GM12878 (cell line): ENCODE measurements at regions of chr6 and their contacts with region 1.

Region 1: DNA sequence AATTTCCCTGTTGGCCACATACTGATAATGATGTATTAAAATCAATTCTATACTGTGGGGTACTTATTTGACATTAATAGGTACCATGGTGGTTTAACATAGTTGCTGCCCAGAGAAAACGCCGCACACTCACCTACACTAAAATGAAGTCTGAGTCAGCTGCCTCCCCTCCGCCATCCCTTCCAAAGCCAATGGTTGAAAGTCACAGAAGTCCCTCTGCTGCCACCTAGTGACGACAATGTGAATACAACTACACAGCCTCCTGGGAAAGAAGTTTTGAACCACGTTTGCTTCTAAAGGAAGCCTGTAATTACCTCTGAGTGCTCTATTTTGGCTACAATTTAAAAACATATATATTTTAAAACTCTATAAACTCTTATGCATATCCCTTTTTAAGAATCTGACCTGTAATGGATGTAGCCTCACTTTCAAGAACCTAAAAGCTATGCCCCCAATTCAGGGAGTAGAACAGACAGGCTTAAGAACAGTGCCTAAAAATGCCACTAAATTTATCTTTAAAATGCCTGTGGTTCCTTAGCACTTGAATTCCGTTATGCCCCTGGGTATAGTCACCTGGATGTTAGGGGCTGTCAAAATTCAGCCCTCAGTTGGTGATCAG is 20.6 kb upstream of the ECI2 start:
- DNase-seq: no peak
- ATAC-seq: peak; percentile 98
- H3K4me3 ChIP-seq: no peak overlapping the region
- H3K27ac ChIP-seq: no peak overlapping the region
- H3K4me1 ChIP-seq: no peaks in the 10 kb centered on the region
- H3K27me3 ChIP-seq: no peaks in the 10 kb centered on the region
- CTCF ChIP-seq: peak; percentile 74 to 87 (median 79)
- EP300 ChIP-seq: no peak
- POLR2A ChIP-seq: no peak
- RAD21 ChIP-seq: peak; percentile 89

Region 2: GRCh38 chr6:3742426-3743344 is 413.3 kb before region 1 on chr6:
- CTCF ChIA-PET with region 1: interaction called, 22 read pairs
- POLR2A ChIA-PET with region 1: no interaction called
- RAD21 ChIA-PET with region 1: interaction called, 7 read pairs
- SMC1A ChIA-PET with region 1: interaction called, 9 read pairs
- in situ Hi-C with region 1: loop called (anchors 5 kb)
- intact Hi-C with region 1: loop called (anchors 1 kb)
- DNase-seq: no peak
- ATAC-seq: peak; percentile 87
- H3K4me3 ChIP-seq: no peak overlapping the region
- H3K27ac ChIP-seq: no peak overlapping the region
- H3K4me1 ChIP-seq: peaks cover 8% of the 10 kb centered on the region
- H3K27me3 ChIP-seq: no peaks in the 10 kb centered on the region
- CTCF ChIP-seq: peak; percentile 81 to 98 (median 83); a peak in 5 of 6 replicates
- EP300 ChIP-seq: no peak
- POLR2A ChIP-seq: no peak
- RAD21 ChIP-seq: peak; percentile 95

Region 3: DNA sequence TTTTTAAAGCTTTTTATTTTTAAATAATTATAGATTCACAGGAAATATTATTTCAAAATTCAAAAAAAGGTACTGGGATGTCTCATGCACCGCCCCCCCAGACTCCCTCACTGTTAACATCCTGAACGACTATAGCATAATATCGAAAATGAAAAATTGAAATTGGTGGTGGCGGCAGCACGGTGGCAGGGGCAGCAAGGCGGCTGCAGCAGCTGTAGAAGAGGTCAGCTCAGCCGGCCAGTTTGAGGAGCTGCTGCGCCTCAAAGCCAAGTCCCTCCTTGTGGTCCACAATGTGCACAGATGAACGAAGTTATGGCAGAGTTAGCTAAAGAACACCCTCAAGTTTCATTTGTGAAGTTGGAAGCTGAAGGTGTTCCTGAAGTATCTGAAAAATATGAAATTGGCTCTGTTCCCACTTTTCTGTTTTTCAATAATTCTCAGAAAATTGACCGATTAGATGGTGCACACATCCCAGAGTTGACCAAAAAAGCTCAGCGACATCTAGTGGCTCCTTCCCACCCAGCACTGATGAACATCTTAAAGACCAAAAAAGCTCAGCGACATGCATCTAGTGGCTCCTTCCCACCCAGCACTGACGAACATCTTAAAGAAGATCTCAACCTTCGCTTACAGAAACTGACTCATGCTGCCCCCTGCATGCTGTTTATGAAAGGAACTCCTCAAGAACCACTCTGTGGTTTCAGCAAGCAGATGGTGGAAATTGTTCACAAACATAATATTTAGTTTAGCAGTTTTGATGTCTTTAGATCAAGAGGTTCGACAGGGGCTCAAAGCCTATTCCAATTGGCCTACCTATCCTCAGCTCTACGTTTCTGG is 177.9 kb before region 1 on chr6:
- CTCF ChIA-PET with region 1: interaction called, 11 read pairs
- POLR2A ChIA-PET with region 1: no interaction called
- RAD21 ChIA-PET with region 1: no interaction called
- SMC1A ChIA-PET with region 1: interaction called, 5 read pairs
- in situ Hi-C with region 1: no loop called
- intact Hi-C with region 1: no loop called
- DNase-seq: peak; percentile 38
- ATAC-seq: peak; percentile 97
- H3K4me3 ChIP-seq: no peak overlapping the region
- H3K27ac ChIP-seq: no peak overlapping the region
- H3K4me1 ChIP-seq: no peaks in the 10 kb centered on the region
- H3K27me3 ChIP-seq: no peaks in the 10 kb centered on the region
- CTCF ChIP-seq: peak; percentile 59 to 71 (median 64); a peak in 5 of 6 replicates
- EP300 ChIP-seq: no peak
- POLR2A ChIP-seq: no peak
- RAD21 ChIP-seq: peak; percentile 50

Region 4: DNA sequence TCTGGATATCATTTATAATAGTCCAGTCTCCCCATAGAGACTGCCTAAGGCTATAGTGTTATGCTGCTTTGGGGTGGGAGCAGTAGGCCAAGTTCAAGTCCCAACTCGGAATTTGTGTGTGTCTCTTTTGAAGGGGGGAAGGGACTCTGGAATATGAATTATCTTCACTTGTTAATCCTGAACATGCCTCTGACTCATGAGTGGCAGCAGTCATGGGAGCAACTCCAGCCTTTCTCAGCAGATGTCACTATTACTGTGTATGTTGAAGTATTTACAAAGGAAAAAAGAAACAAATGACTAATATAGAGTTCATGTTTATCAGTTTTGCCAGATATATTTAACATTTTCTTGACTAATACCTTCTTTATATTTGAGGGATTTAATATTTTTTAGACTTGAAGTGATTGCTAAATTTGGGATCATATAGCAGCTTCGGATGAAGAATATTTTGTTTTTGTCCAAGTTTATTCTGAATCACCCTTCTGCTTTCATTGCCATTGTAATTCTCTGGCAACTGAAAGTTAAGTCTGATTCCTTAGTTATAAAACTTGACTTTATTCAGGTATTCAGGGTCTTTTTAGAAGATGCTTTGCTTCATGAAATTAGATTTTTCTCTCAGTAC is 100.4 kb before region 1 on chr6:
- CTCF ChIA-PET with region 1: interaction called, 55 read pairs
- POLR2A ChIA-PET with region 1: no interaction called
- RAD21 ChIA-PET with region 1: interaction called, 17 read pairs
- SMC1A ChIA-PET with region 1: interaction called, 22 read pairs
- in situ Hi-C with region 1: no loop called
- intact Hi-C with region 1: no loop called
- DNase-seq: no peak
- ATAC-seq: no peak
- H3K4me3 ChIP-seq: no peak overlapping the region
- H3K27ac ChIP-seq: no peak overlapping the region
- H3K4me1 ChIP-seq: no peaks in the 10 kb centered on the region
- H3K27me3 ChIP-seq: no peaks in the 10 kb centered on the region
- CTCF ChIP-seq: peak in 2 of 3 experiments; percentile 19 to 33; a peak in 1 of 6 replicates
- EP300 ChIP-seq: no peak
- POLR2A ChIP-seq: no peak
- RAD21 ChIP-seq: peak; percentile 25; the same call in 1 of the 2 replicates

Region 5: GRCh38 chr6:4135665-4136353 is 20.1 kb before region 1 on chr6:
- CTCF ChIA-PET with region 1: interaction called, 32 read pairs
- POLR2A ChIA-PET with region 1: interaction called, 3 read pairs
- RAD21 ChIA-PET with region 1: interaction called, 32 read pairs
- SMC1A ChIA-PET with region 1: interaction called, 83 read pairs
- in situ Hi-C with region 1: no loop called
- intact Hi-C with region 1: no loop called
- DNase-seq: peak; percentile 49
- ATAC-seq: peak; percentile 92
- H3K4me3 ChIP-seq: peak overlapping the region; percentile 83
- H3K27ac ChIP-seq: peak overlapping the region; percentile 57
- H3K4me1 ChIP-seq: peaks cover 11% of the 10 kb centered on the region
- H3K27me3 ChIP-seq: no peaks in the 10 kb centered on the region
- CTCF ChIP-seq: no peak
- EP300 ChIP-seq: no peak
- POLR2A ChIP-seq: peak; percentile 64
- RAD21 ChIP-seq: no peak